BJ (cell line): ENCODE measurements at regions of chr3 and their contacts with region 1.

Region 1: DNA sequence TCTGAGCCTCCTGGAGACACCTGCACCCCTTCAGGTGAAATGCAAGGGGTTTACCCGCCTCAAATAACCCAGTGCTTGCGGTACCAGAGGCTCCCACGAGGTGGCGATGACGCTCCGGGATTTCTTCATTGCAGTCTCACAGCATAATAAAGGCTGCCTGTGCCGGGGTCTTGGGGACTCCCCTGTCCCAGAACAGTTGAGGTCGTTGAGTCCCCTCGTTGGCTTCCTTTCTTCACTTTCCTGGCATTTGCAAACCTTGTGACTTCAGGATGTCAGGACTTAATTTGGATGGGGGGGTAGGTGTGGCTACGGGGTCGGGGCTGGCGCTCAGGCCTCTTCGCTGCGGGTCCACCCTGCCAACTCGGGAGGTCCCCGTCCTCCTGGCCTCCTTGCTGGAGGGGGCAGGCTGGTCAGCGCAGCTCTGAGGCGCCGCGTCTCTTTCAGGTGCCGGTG is 1.3 kb downstream of the GNAT1 start:
- DNase-seq: no peak
- H3K4me3 ChIP-seq: no peak overlapping the region
- H3K27me3 ChIP-seq: peaks cover 10% of the 10 kb centered on the region
- CTCF ChIP-seq: peak; percentile 92

Region 2: DNA sequence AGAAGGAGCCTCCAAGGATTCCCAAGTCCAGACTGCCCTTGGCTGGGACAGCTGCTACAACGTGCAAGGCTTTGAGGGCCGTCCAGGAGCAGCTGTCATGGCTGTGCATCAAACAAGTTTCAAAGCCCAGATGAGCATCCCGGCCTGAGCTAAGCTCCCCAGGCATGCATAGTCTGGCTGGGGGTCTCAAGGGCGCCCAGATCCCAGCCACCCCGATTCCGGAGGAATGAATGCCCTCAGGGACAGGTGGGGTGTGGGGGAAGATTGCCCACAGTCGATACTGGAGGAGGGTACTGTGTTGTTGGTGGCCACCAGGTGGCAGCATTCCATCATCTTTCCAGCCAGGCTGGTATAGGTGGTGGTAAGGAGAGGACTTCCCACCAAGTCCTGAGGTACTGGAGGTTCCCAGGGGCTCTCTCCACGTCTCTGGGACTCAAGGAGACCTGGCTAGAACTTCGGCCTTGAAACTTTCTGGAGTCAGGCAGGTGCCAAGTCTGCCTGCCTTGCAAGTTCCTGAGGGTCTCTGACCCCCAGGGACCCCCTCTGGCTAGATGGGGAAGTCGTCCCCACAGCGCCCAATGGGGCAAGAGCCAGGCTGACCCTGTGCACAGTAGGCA is 71.2 kb before region 1 on chr3:
- CTCF ChIA-PET with region 1: interaction called, 313 read pairs
- POLR2A ChIA-PET with region 1: no interaction called
- DNase-seq: peak; percentile 20
- H3K4me3 ChIP-seq: no peak overlapping the region
- H3K27me3 ChIP-seq: no peaks in the 10 kb centered on the region
- CTCF ChIP-seq: peak; percentile 78

Region 3: DNA sequence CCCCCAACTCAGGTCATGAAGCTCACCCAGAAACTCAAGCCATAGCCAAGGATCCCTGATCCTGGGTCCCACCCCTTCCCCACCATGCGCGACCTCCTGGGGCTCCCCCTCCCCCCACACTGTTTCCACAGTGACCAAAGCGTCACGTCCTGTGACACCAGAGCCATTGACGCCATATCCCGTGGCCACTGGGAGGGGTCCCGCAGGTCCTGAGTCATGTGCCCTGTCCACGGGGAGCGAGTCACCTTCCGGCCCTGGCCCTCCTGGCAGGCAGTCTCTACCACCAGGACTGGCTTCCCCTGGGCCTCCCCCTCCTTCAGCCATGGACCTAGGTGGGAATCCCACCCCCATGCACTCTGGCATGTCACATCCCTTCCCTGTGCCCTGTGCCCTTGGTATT is 22.0 kb before region 1 on chr3:
- CTCF ChIA-PET with region 1: interaction called, 21 read pairs
- POLR2A ChIA-PET with region 1: no interaction called
- DNase-seq: no peak
- H3K4me3 ChIP-seq: no peak overlapping the region
- H3K27me3 ChIP-seq: no peaks in the 10 kb centered on the region
- CTCF ChIP-seq: no peak

Region 4: GRCh38 chr3:50211930-50212329 is 19.2 kb after region 1 on chr3:
- CTCF ChIA-PET with region 1: interaction called, 378 read pairs
- POLR2A ChIA-PET with region 1: no interaction called
- DNase-seq: no peak
- H3K4me3 ChIP-seq: no peak overlapping the region
- H3K27me3 ChIP-seq: peaks cover 4% of the 10 kb centered on the region
- CTCF ChIP-seq: no peak

Region 5: GRCh38 chr3:50245831-50246516 is 53.3 kb after region 1 on chr3:
- CTCF ChIA-PET with region 1: interaction called, 40 read pairs
- POLR2A ChIA-PET with region 1: no interaction called
- DNase-seq: no peak
- H3K4me3 ChIP-seq: peak overlapping the region; percentile 34
- H3K27me3 ChIP-seq: no peaks in the 10 kb centered on the region
- CTCF ChIP-seq: peak; percentile 100

Region 6: GRCh38 chr3:50267280-50267913 is 74.7 kb after region 1 on chr3:
- CTCF ChIA-PET with region 1: interaction called, 55 read pairs
- POLR2A ChIA-PET with region 1: no interaction called
- DNase-seq: no peak
- H3K4me3 ChIP-seq: peak overlapping the region; percentile 59
- H3K27me3 ChIP-seq: no peaks in the 10 kb centered on the region
- CTCF ChIP-seq: no peak

Region 7: GRCh38 chr3:50327943-50328691 is 135.4 kb after region 1 on chr3 and contains the start of gene TUSC2:
- CTCF ChIA-PET with region 1: interaction called, 23 read pairs
- POLR2A ChIA-PET with region 1: no interaction called
- DNase-seq: peak; percentile 74
- H3K4me3 ChIP-seq: peak within 1 kb of the TSS; percentile 72
- H3K27me3 ChIP-seq: no peaks in the 10 kb centered on the region
- CTCF ChIP-seq: no peak
- polyA plus RNA-seq, gene TUSC2: 33.8 and 38.9 TPM in 2 replicates